ENCODE measurements at regions of chr22 and their contacts with region 1.

Region 1: DNA sequence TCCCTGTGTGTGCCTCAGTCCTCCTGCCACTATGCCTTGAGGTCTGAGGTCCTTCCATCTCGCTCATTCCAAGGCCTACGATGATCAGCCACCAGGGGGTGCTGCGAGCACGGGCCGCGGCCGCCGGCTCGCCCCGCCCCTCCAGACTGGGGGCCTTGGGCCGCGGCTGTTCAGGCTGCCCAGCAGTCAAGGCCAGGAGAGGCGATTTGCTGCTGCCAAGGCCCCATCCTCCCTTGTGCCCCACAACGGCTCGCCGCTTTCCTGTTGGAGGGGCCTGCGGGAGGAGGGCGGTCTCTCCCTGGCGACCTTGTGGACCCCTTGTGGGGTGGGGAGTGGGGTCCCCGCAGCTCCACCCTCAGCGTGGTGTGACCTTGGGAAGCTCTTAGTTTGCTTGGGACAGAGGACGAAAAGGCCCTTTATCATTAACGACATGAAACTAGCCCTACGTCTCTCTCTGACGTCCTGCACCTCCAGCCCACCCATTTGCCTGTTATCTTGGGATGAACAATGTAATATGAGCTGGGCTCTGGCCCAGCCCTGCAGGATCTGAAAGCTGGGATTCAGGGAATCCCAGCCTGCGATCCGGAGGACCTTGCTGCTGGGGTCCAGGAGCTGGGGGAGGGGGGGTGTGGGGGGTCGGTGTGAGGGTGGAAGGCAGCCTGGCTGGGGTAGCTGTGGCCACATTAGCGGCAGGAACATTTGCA is 5.3 kb upstream of the GALR3 start:
- DNase-seq: peak in 2 of 3 donors; percentile 71 to 77
- H3K4me3 ChIP-seq: peak overlapping the region in 6 of 7 experiments; percentile 8 to 70 (median 40)
- H3K27ac ChIP-seq: no peak overlapping the region
- H3K4me1 ChIP-seq: peaks cover 0 to 21% (median 17%) of the 10 kb centered on the region in 4 experiments
- H3K27me3 ChIP-seq: peaks cover 0 to 16% (median 7%) of the 10 kb centered on the region in 5 experiments

Region 2: DNA sequence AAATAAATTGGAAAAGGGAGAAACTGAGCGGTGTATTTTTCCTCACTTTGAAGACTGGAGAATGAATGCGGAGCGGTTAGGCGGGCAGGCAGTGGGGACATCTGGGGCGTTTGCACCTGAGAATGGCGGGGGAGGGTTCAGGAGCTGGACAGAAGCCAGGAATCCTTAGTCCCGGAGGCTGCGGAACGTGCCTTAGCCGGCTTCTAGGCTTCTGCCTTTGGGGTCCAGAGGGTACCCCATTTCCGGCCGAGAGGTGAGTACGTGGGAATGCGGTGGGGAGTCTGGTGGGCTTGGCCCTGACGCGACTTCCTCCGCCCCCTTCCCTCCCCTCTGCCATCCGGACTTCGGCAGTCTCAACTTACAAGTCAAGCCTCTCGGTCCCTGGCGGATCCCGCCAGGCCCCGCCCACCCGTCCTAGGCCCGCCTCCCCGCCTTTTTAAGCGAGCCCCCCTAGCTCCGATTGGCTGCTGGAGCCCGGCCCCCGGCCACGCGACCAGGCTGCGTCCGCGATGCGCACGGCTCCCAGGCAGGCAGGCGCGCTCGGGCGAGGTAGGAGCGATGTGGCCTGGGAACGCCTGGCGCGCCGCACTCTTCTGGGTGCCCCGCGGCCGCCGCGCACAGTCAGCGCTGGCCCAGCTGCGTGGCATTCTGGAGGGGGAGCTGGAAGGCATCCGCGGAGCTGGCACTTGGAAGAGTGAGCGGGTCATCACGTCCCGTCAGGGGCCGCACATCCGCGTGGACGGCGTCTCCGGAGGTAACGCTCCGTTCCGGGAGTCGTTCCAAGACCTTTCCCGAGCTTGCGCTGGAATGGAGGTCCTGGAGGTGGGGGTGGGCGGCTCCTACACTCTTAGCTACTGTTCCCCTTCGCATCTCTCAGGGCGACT is 10.2 kb before region 1 on chr22 and contains the start of gene GCAT:
- CTCF ChIA-PET with region 1: interaction called, 52 read pairs
- POLR2A ChIA-PET with region 1: interaction called, 8 read pairs
- DNase-seq: peak; percentile 94 to 97 (median 97)
- H3K4me3 ChIP-seq: peak within 1 kb of the TSS; percentile 49 to 97 (median 77)
- H3K27ac ChIP-seq: peak within 1 kb of the TSS; percentile 8 to 82
- H3K4me1 ChIP-seq: peaks cover 16 to 50% (median 47%) of the 10 kb centered on the region in 4 experiments
- H3K27me3 ChIP-seq: no peaks in the 10 kb centered on the region

Region 3: GRCh38 chr22:37843741-37843990 is 25.8 kb after region 1 on chr22:
- CTCF ChIA-PET with region 1: interaction called, 10 read pairs
- POLR2A ChIA-PET with region 1: interaction called, 7 read pairs
- DNase-seq: peak in 1 of 3 donors; percentile 67
- H3K4me3 ChIP-seq: peak overlapping the region; percentile 65 to 84 (median 82)
- H3K27ac ChIP-seq: peak overlapping the region; percentile 79 to 89
- H3K4me1 ChIP-seq: peaks cover 5 to 22% (median 14%) of the 10 kb centered on the region in 4 experiments
- H3K27me3 ChIP-seq: no peaks in the 10 kb centered on the region

Region 4: GRCh38 chr22:37862570-37863325 is 44.9 kb after region 1 on chr22:
- CTCF ChIA-PET with region 1: interaction called, 142 read pairs
- POLR2A ChIA-PET with region 1: interaction called, 3 read pairs
- DNase-seq: no peak
- H3K4me3 ChIP-seq: no peak overlapping the region
- H3K27ac ChIP-seq: no peak overlapping the region
- H3K4me1 ChIP-seq: no peaks in the 10 kb centered on the region
- H3K27me3 ChIP-seq: no peaks in the 10 kb centered on the region

Region 5: DNA sequence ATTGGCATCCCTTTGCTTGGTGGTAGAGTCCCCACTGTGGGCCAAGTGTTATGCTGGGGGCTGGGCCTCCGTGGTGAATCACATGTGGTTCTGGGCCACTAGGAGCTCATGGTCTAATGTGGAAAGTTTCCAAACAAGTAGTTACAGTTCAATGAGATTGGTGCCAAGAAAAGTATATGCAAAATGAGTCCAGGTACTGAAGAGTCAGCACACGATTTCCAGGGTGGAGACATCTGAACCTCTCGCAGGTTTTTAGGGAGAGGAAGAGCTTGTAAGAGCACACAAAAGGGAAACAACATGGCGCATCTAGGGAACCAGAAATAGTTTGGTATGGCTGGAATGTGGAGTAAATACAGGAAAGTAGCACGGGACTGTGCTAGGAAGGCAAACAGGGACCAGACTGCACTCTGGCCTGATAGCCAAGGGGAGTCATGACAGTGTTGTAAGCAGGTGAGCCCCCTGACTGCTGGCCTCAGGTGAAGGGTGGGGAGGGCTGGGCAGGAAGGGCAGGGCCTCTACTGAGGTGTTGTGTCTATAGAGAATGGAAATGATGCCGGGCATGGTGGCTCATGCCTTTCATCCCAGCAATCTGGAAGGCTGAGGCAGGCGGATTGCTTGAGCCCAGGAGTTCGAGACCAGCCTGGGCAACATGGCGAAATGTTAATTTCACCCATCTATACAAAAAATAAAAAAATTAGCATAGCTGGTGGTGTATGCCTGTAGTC is 148.2 kb after region 1 on chr22:
- CTCF ChIA-PET with region 1: interaction called, 14 read pairs
- POLR2A ChIA-PET with region 1: no interaction called
- DNase-seq: no peak
- H3K4me3 ChIP-seq: no peak overlapping the region
- H3K27ac ChIP-seq: no peak overlapping the region
- H3K4me1 ChIP-seq: no peaks in the 10 kb centered on the region
- H3K27me3 ChIP-seq: no peaks in the 10 kb centered on the region

Region 6: DNA sequence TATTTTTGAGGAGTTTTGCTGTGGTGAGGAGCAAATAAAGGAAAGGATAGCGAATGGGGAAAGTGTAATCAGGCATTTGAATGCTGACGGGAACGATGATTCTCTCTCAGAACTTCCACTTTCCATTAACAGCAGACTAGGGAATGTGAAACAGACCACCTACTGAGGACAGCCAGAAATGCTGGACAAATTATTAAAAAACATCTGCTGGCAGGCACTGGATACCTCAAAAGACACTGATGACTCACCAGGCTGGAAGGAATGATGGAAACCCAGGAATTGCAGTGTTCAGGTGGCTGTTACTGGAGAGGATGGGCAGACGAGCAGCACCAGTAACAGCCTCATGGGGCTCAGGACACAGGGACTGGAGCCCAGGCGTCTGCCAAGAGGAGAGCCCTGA is 330.4 kb after region 1 on chr22:
- CTCF ChIA-PET with region 1: no interaction called
- POLR2A ChIA-PET with region 1: no interaction called
- DNase-seq: no peak
- H3K4me3 ChIP-seq: no peak overlapping the region
- H3K27ac ChIP-seq: no peak overlapping the region
- H3K4me1 ChIP-seq: peaks cover 0 to 10% (median 0%) of the 10 kb centered on the region in 4 experiments
- H3K27me3 ChIP-seq: no peaks in the 10 kb centered on the region

Measured in common myeloid progenitor, CD34-positive (primary cell).